ENCODE measurements at regions of chr4 and their contacts with region 1.

Region 1: DNA sequence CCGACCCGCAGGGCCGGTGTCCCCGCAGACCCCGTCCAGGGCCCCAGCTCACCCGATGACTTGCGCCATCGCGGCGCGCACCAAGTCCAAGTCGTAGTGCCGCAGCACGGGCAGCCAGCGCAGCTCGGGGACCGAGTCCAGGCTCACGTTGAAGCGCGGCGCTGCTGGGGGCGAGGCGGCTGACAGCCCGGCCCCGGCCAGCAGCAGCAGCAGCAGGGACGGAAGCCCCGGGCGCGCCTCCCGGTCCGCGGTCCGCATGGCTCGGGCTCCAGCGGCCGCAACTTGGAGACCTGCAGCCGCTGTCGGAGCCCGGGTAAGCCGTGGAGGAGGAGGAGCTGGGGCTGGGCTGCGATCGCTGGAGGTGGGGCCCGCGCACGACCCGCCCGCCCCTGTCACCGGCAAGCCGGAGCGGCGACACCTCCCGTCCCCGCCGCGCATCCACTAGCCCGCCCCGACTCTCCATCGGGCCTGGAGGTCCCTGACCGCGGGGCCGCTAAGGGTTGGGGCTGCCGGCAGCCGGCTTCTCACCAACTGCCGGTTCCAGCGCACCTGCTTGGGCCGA is at the start of gene NAAA:
- DNase-seq: peak; percentile 83
- H3K4me3 Mint-ChIP-seq: peak within 1 kb of the TSS; percentile 98
- H3K27ac Mint-ChIP-seq: peak within 1 kb of the TSS; percentile 96
- H3K4me1 Mint-ChIP-seq: peaks cover 32% of the 10 kb centered on the region
- H3K27me3 Mint-ChIP-seq: no peaks in the 10 kb centered on the region
- total RNA-seq, gene NAAA: 31.3 and 31.8 TPM in 2 replicates

Region 2: DNA sequence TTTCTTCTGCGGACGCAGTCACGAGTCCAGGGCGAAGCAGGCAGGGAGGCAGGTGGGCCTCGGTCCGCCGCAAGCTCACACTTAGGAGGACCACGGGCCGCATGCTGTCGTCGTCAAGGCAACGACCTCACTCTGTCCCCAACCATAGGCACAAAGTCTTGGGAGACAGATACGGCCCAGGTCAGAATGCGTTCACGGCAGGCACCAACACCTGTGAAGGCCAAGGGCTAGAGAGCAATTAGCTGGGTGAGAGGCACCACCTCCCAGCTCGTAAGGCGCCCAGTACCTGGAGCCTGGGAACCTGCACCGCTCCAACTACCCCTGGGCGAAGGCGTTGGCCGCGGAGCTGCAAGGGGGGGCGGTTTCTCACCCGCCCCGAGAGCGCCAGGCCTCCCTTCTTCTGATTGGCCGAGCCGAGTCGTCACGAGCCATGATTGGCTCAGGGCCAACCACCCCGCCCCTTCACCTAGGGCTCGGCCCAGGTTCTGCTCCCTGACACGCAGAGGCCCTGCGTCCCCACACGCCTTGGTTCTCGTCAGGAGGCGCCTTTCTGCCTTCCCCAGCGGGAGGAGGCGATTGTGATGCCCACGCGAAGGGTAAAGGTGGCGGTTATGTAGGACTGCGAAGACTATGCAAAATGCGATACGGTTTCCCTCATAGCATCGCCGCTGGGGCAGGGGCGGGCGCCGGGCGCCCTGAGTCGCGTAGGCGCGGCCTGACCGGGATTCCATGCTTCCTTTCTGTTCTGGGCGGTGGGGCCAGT is 310.4 kb before region 1 on chr4 and contains the start of gene CDKL2:
- intact Hi-C with region 1: loop called (anchors 10 kb)
- DNase-seq: peak; percentile 89
- H3K4me3 Mint-ChIP-seq: peak within 1 kb of the TSS; percentile 86
- H3K27ac Mint-ChIP-seq: peak within 1 kb of the TSS; percentile 40
- H3K4me1 Mint-ChIP-seq: peaks cover 20% of the 10 kb centered on the region
- H3K27me3 Mint-ChIP-seq: peaks cover 11% of the 10 kb centered on the region
- total RNA-seq, gene CDKL2: 0.16 and 0.22 TPM in 2 replicates

Region 3: DNA sequence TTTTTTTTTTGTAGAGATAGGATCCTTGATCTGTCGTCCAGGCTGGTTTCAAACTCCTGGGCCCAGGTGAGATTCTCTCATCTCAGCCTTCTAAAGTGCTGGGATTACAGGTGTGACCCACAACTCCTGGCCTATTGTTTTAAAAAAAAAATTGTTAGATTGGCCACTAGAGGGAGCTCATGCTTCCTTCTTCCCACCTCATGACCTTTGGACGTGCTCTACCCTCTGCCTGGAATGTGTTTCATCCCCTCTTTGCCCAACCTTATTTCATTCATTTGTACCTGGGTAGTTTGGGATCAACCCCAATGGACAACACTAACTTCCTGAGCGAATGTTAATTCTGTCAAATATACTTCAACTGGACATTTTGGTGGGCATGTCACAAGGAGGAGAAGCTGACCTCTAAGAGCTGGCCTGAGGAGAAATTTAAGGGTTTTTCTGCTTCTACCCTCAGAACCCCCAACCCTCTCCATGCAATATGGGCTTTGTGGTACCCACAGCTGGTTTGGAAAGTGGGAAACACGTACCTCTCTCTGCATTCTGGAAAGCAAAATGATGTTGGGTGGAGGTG is 44.9 kb before region 1 on chr4:
- intact Hi-C with region 1: loop called (anchors 1 kb)
- DNase-seq: no peak
- H3K4me3 Mint-ChIP-seq: no peak overlapping the region
- H3K27ac Mint-ChIP-seq: no peak overlapping the region
- H3K4me1 Mint-ChIP-seq: no peaks in the 10 kb centered on the region
- H3K27me3 Mint-ChIP-seq: peaks cover 11% of the 10 kb centered on the region

Region 4: GRCh38 chr4:75924309-75924827 is 16.4 kb before region 1 on chr4:
- intact Hi-C with region 1: no loop called
- DNase-seq: no peak
- H3K4me3 Mint-ChIP-seq: no peak overlapping the region
- H3K27ac Mint-ChIP-seq: no peak overlapping the region
- H3K4me1 Mint-ChIP-seq: no peaks in the 10 kb centered on the region
- H3K27me3 Mint-ChIP-seq: no peaks in the 10 kb centered on the region

Region 5: GRCh38 chr4:75989846-75990528 is 49.2 kb after region 1 on chr4:
- intact Hi-C with region 1: loop called (anchors 1 kb)
- DNase-seq: no peak
- H3K4me3 Mint-ChIP-seq: peak overlapping the region; percentile 93
- H3K27ac Mint-ChIP-seq: peak overlapping the region; percentile 83
- H3K4me1 Mint-ChIP-seq: peaks cover 27% of the 10 kb centered on the region
- H3K27me3 Mint-ChIP-seq: no peaks in the 10 kb centered on the region

Region 6: GRCh38 chr4:76301068-76301774 is 360.4 kb after region 1 on chr4:
- intact Hi-C with region 1: loop called (anchors 5 kb)
- DNase-seq: peak; percentile 32
- H3K4me3 Mint-ChIP-seq: peak overlapping the region; percentile 7
- H3K27ac Mint-ChIP-seq: no peak overlapping the region
- H3K4me1 Mint-ChIP-seq: peaks cover 62% of the 10 kb centered on the region
- H3K27me3 Mint-ChIP-seq: peaks cover 3% of the 10 kb centered on the region